ENCODE measurements at regions of chr5 and their contacts with region 1.

Region 1: DNA sequence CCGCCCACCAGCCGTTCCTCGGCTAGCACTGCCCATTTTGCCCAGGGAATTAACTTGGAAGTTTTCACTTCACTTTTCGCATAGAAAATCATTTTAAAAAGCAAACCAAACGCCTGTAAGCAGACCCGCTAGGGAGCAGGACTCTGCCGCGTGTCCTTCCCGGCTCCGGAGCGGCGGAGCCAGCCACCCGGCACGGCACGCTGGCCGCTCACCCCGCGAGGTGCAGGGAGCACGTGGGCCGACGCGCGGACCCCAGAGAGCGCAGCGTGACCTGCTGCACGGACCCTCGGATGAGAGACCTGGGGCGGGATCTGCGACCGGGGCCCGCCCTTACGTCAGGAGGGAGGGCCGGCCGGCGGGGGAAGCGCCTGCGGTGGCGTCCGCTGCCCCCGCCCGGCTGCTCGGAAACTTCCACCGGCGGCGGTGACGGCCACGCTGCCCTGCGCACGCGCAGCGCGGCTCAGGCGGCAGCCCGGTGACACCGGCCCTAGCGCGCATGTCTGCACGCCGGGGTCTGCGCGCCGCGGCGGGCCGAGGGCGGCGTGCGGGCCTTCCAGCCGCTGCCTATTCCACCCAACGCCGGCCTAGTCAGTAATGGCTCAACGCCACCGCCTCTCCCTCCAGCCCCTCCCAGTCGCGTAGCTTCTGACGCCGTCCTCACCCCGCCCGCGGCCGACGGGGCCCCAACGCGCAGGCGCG is 506 bp upstream of the TENT4A start:
- DNase-seq: peak; percentile 89 to 96
- ATAC-seq: peak; percentile 77 to 79
- H3K4me3 ChIP-seq: peak overlapping the region; percentile 78 to 100 (median 90)
- H3K27ac ChIP-seq: peak overlapping the region; percentile 95 to 100 (median 99)
- H3K4me1 ChIP-seq: peaks cover 34 to 37% of the 10 kb centered on the region in 2 donors
- H3K27me3 ChIP-seq: no peaks in the 10 kb centered on the region
- CTCF ChIP-seq: no peak
- POLR2A ChIP-seq: peak; percentile 77 to 85

Region 2: DNA sequence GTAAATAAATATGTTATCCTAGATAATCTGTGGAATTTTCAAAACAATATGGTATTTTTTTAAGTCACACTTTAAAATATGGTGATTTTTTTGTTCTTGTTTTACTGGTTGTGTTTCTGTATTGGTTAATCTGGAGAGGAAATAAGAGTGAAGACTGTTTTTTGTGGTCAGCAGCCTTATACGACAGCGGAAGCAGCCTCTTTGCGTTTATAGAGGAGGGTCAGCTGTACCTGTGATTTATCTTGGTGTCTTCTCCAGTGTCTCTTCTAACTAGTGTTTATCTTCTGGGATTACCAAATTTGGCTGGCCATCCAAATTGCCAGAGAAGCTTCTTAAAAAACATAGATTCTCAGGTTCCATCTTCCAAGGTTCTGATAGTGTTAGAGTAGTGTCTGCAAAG is 1231.5 kb before region 1 on chr5:
- in situ Hi-C with region 1: no loop called
- intact Hi-C with region 1: loop called (anchors 5 kb)
- DNase-seq: peak in 1 of 2 donors; percentile 23
- ATAC-seq: peak; percentile 55 to 83
- H3K4me3 ChIP-seq: peak overlapping the region in 1 of 4 donors; percentile 20
- H3K27ac ChIP-seq: peak overlapping the region; percentile 71 to 85 (median 84)
- H3K4me1 ChIP-seq: peaks cover 23 to 28% of the 10 kb centered on the region in 2 donors
- H3K27me3 ChIP-seq: no peaks in the 10 kb centered on the region
- CTCF ChIP-seq: no peak
- POLR2A ChIP-seq: no peak

Region 3: DNA sequence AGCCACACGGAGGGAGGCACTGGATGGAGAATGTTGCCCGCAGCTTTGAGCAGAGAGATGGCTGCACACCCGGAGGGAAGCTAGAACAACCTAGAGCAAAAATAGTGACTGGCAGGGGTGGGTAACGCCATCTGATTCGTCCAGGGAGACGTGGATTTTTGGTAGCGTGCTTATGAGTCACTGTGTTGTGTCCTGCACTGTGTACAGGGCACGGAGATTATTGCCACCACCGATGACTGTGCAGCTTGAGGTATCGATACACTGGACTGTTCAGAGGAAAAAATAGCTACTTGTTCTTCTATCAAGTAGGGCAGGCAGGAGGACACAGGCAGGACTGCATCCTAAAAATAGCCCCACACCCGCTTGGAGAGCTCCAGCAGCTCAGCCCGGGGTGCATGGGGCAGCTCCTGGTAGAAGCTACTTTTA is 258.1 kb before region 1 on chr5:
- in situ Hi-C with region 1: no loop called
- intact Hi-C with region 1: loop called (anchors 2 kb)
- DNase-seq: peak; percentile 88 to 93
- ATAC-seq: peak; percentile 69 to 78
- H3K4me3 ChIP-seq: peak overlapping the region; percentile 4 to 28 (median 22)
- H3K27ac ChIP-seq: peak overlapping the region; percentile 91 to 97 (median 96)
- H3K4me1 ChIP-seq: peaks cover 54 to 57% of the 10 kb centered on the region in 2 donors
- H3K27me3 ChIP-seq: no peaks in the 10 kb centered on the region
- CTCF ChIP-seq: no peak
- POLR2A ChIP-seq: peak; percentile 57 to 81

Region 4: DNA sequence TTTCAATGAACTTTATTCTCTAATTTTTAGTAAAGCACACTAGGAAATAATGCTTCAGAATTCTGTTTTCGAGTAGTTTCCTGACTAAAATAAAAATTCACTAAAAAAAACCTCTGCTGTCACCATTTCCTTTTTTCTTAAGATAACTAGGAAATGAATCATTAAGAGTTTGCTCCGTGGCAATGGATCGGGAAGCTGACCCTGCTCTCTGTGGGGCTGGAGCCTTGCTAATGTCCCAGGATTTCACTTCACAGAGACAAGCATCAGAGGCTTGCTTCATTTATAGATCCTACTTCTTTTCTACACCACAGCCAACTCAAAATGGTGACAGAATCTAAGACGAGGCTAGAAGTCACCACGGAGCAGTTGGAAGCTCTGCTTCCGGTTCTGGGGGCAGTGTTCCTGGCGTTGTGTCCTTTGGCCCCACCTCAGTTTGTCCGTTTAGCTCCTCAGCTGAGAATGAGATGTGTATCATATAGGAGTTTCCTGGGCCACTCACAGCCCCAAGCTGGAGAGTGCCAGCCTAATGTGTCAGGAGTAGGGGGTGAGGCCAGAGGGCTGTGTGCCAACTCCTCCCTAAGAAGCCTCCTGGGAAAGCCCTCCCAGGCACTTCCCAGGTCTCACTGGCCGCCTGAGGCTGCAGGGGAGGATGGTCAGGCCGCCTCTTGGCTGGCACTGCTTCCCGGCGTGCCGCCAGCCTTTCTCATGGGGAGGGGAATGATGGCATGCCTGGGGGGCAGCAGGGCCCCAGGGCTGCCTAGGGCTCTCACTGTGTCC is 20.1 kb after region 1 on chr5:
- in situ Hi-C with region 1: no loop called
- intact Hi-C with region 1: loop called (anchors 2 kb)
- DNase-seq: no peak
- ATAC-seq: peak in 1 of 2 donors; percentile 44
- H3K4me3 ChIP-seq: peak overlapping the region in 3 of 4 donors; percentile 15 to 21 (median 18)
- H3K27ac ChIP-seq: peak overlapping the region; percentile 54 to 70 (median 62)
- H3K4me1 ChIP-seq: peaks cover 55 to 78% of the 10 kb centered on the region in 2 donors
- H3K27me3 ChIP-seq: no peaks in the 10 kb centered on the region
- CTCF ChIP-seq: no peak
- POLR2A ChIP-seq: no peak

Region 5: GRCh38 chr5:6827526-6828219 is 114.9 kb after region 1 on chr5:
- in situ Hi-C with region 1: no loop called
- intact Hi-C with region 1: loop called (anchors 5 kb)
- DNase-seq: no peak
- ATAC-seq: no peak
- H3K4me3 ChIP-seq: no peak overlapping the region
- H3K27ac ChIP-seq: no peak overlapping the region
- H3K4me1 ChIP-seq: peaks cover 10 to 28% of the 10 kb centered on the region in 2 donors
- H3K27me3 ChIP-seq: no peaks in the 10 kb centered on the region
- CTCF ChIP-seq: no peak
- POLR2A ChIP-seq: no peak

Region 6: GRCh38 chr5:7868773-7869473 is 1156.2 kb after region 1 on chr5 and contains the starts of genes FASTKD3 and MTRR:
- in situ Hi-C with region 1: no loop called
- intact Hi-C with region 1: loop called (anchors 5 kb)
- DNase-seq: peak; percentile 93
- ATAC-seq: peak; percentile 99 to 100
- H3K4me3 ChIP-seq: peak within 1 kb of the TSS; percentile 86 to 99 (median 96)
- H3K27ac ChIP-seq: peak within 1 kb of the TSS; percentile 89 to 95 (median 93)
- H3K4me1 ChIP-seq: peaks cover 28 to 37% of the 10 kb centered on the region in 2 donors
- H3K27me3 ChIP-seq: no peaks in the 10 kb centered on the region
- CTCF ChIP-seq: peak in 2 of 5 experiments; percentile 5 to 14
- POLR2A ChIP-seq: peak; percentile 83 to 89
- total RNA-seq, gene FASTKD3: 6.8 to 9.4 (median 7.3) TPM
- total RNA-seq, gene MTRR: 27.9 to 75.1 (median 50.8) TPM

Measured in gastrocnemius medialis (tissue), 4 donors.